Panc1 (cell line): ENCODE measurements at regions of chr6 and their contacts with region 1.

Region 1: DNA sequence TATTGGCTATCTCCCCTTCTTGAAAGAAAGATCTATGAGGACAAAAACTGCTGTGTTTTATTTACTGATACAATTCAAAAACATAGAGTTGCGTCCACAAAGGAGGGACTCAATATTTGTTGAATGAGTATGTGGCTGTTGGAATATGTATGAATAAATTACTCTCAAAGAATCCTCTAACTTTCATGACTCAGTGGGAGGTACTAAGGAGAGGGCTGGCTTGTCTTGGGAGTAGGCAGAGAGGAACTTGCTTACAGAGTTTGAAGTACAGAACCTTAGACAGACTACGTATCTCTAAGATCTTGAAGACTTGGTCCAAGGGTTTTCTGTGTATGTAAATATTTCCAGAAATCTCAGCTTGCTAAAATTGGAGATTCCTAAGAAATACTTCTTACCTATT is 504.0 kb upstream of the PTCHD4 start:
- DNase-seq: no peak
- ATAC-seq: no peak
- H3K4me3 ChIP-seq: no peak overlapping the region
- H3K27ac ChIP-seq: no peak overlapping the region
- H3K4me1 ChIP-seq: no peaks in the 10 kb centered on the region
- H3K27me3 ChIP-seq: no peaks in the 10 kb centered on the region
- CTCF ChIP-seq: no peak

Region 2: GRCh38 chr6:48318670-48319069 is 296.4 kb before region 1 on chr6:
- CTCF ChIA-PET with region 1: interaction called, 12 read pairs
- POLR2A ChIA-PET with region 1: no interaction called
- in situ Hi-C with region 1: no loop called
- intact Hi-C with region 1: no loop called
- DNase-seq: no peak
- ATAC-seq: no peak
- H3K4me3 ChIP-seq: no peak overlapping the region
- H3K27ac ChIP-seq: no peak overlapping the region
- H3K4me1 ChIP-seq: no peaks in the 10 kb centered on the region
- H3K27me3 ChIP-seq: no peaks in the 10 kb centered on the region
- CTCF ChIP-seq: no peak

Region 3: DNA sequence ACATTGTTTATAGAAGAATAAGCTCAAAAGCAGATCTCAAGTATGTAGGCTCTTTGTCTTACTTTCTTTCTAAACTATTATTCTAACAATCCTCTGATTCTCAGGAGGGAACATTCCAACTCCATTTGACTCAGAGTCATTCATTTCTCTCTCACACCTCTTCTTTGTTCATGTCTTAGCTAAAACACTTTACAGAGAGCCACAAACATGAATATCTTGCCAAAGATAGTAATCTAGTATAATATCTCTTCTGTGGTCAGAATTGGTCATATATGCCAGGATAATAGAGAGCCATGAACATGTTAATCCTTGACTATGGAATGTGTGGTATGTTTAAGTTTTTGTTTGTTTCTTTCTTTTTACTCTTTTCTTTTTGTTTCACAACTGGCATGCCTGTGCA is 48.0 kb before region 1 on chr6:
- CTCF ChIA-PET with region 1: no interaction called
- POLR2A ChIA-PET with region 1: no interaction called
- in situ Hi-C with region 1: no loop called
- intact Hi-C with region 1: no loop called
- DNase-seq: no peak
- ATAC-seq: no peak
- H3K4me3 ChIP-seq: no peak overlapping the region
- H3K27ac ChIP-seq: no peak overlapping the region
- H3K4me1 ChIP-seq: no peaks in the 10 kb centered on the region
- H3K27me3 ChIP-seq: no peaks in the 10 kb centered on the region
- CTCF ChIP-seq: no peak

Region 4: GRCh38 chr6:48597951-48598350 is 17.1 kb before region 1 on chr6:
- CTCF ChIA-PET with region 1: no interaction called
- POLR2A ChIA-PET with region 1: no interaction called
- in situ Hi-C with region 1: no loop called
- intact Hi-C with region 1: no loop called
- DNase-seq: no peak
- ATAC-seq: no peak
- H3K4me3 ChIP-seq: no peak overlapping the region
- H3K27ac ChIP-seq: no peak overlapping the region
- H3K4me1 ChIP-seq: no peaks in the 10 kb centered on the region
- H3K27me3 ChIP-seq: no peaks in the 10 kb centered on the region
- CTCF ChIP-seq: no peak